ENCODE measurements at regions of chr19 and their contacts with region 1.

Region 1: DNA sequence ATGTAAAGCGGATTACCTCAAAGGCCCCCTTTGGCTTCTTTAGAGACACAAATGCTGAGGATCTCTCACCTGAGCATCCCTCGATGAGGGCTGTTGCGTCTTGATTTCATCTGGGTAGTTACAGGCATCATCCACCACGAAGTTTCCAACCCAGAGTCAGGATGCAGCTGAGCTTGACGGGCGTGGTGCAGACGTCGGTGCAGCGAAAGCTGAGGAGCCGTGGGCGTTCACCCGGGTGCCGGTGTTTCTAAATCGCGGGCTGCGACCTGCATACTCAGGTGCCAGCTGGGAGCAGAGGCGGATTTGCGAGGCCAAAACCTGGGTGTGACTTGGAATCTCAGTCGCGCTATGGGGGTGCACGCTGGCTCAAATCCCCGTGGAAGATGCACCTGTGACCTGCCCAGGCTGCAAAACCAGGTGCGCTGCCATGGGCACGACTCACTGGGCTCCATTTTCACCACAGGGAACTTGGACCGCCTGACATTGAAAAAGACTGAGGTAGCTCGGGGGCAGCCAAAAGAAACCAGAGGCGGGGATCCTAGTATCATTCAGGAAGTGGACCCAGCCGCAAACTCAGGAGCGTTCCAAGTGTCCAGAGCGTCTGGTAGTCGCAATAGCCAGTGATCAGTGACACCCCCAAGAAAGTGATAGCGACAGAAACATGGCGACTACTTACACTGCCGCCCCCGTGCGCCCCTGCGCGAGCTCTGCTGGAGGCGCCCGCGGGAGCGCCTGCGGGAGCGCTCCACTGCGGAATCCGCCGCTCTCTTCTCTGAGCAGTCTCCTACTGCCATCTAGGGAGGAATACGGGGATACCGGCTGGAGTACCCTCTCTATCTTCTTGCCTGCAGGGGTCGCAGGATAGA is 36.4 kb upstream of the IGFL4 start:
- DNase-seq: no peak
- H3K4me3 Mint-ChIP-seq: no peak overlapping the region
- H3K27ac Mint-ChIP-seq: no peak overlapping the region
- H3K4me1 Mint-ChIP-seq: peaks cover 4% of the 10 kb centered on the region
- H3K27me3 Mint-ChIP-seq: peaks cover 77% of the 10 kb centered on the region

Region 2: GRCh38 chr19:46030812-46031550 is 46.2 kb before region 1 on chr19:
- intact Hi-C with region 1: loop called (anchors 1 kb)
- DNase-seq: no peak
- H3K4me3 Mint-ChIP-seq: no peak overlapping the region
- H3K27ac Mint-ChIP-seq: no peak overlapping the region
- H3K4me1 Mint-ChIP-seq: peaks cover 11% of the 10 kb centered on the region
- H3K27me3 Mint-ChIP-seq: peaks cover 18% of the 10 kb centered on the region

Region 3: DNA sequence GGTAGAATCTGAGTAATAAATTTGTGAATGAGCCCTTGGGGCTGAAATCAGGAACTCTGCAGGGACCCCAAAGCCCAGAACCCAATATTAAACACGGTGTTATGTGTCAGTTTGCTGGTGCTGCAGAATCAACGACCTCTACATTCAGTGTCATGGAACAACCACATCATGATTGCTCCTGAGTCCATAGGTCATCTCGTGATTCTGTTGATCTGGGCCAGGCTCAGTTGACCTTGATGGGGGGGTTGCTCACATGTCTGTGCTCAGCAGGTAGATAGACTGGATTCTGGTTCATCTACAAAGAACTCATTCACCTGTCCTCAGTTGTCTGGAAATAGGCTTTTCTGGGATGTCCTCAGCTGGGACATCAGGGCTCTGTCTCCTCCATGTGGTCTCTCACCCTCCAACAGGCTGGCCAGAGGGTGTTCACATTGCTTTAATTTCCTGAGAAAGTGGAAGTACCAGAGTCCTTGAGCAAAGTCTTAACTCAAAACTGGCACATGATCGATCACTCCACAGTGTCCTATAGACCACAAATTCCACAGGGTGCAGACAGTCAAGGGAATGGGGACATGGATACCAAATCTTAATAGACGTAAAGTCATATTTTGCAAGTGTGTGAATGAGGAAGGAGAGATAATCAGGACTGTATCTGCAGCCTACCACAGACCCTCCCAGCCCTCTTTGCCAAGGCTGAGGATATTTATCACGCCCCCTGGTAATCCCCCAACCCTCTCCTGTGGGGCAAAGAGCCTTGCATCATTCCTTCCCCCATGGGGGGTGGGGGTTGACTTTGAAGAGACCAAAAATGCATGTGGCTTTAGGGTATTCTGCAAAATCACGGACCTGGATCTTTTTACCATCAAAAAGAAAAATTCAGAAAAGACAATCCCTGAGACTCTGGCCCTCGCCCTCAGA is 113.0 kb after region 1 on chr19:
- intact Hi-C with region 1: loop called (anchors 1 kb)
- DNase-seq: no peak
- H3K4me3 Mint-ChIP-seq: no peak overlapping the region
- H3K27ac Mint-ChIP-seq: no peak overlapping the region
- H3K4me1 Mint-ChIP-seq: peaks cover 19% of the 10 kb centered on the region
- H3K27me3 Mint-ChIP-seq: peaks cover 37% of the 10 kb centered on the region

Region 4: DNA sequence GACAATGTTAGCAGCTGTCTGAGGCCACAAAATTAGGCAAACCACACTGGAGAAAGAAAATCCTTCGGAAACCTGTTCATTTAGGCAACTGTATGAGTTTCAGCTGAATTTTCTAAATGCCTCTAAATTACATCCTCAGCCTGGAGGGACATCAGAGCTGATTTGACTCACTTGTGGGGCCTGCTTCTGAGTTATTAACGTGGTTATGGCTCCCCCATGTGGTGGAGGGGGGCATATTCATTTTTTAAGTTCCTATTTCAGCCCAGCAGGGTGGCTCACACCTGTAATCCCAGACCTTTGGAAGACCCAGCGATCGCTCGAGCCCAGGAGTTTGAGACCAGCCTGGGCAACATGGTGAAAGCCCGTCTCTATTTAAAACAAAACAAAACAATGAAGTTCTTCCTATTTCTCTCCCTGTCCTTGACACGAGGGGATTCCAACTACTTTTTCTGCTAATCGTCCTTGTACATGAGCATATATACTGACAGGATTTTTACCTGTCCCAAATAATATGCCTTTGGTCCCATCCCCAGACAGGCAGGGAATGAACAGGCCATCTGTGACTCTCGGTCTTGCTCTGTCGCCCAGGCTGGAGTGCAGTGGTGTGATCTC is 188.1 kb after region 1 on chr19:
- intact Hi-C with region 1: loop called (anchors 1 kb)
- DNase-seq: peak; percentile 65
- H3K4me3 Mint-ChIP-seq: no peak overlapping the region
- H3K27ac Mint-ChIP-seq: no peak overlapping the region
- H3K4me1 Mint-ChIP-seq: peaks cover 11% of the 10 kb centered on the region
- H3K27me3 Mint-ChIP-seq: peaks cover 55% of the 10 kb centered on the region

Region 5: GRCh38 chr19:46413262-46414031 is 336.3 kb after region 1 on chr19 and contains the start of gene CCDC8:
- intact Hi-C with region 1: loop called (anchors 5 kb)
- DNase-seq: no peak
- H3K4me3 Mint-ChIP-seq: no peak within 1 kb of the TSS
- H3K27ac Mint-ChIP-seq: no peak within 1 kb of the TSS
- H3K4me1 Mint-ChIP-seq: no peaks in the 10 kb centered on the region
- H3K27me3 Mint-ChIP-seq: peaks cover 62% of the 10 kb centered on the region
- total RNA-seq, gene CCDC8: not detected in 2 replicates

Region 6: GRCh38 chr19:46487802-46488445 is 410.7 kb after region 1 on chr19:
- intact Hi-C with region 1: loop called (anchors 5 kb)
- DNase-seq: peak; percentile 66
- H3K4me3 Mint-ChIP-seq: no peak overlapping the region
- H3K27ac Mint-ChIP-seq: no peak overlapping the region
- H3K4me1 Mint-ChIP-seq: peaks cover 3% of the 10 kb centered on the region
- H3K27me3 Mint-ChIP-seq: peaks cover 64% of the 10 kb centered on the region

Measured in activated T-helper 2 cell treated with anti-CD3 and anti-CD28 coated beads, Interferon-gamma antibody, Interleukin-2, Interleukin-4, amounts not matched to agents 10 μg/mL and 5 μg/mL and 100 μg/mL, durations not matched to agents 14 hours and 24 hours and 36 hours (primary cell).